ENCODE measurements at regions of chr21 and their contacts with region 1.

Region 1: GRCh38 chr21:29091032-29091431 is 17.6 kb upstream of the CCT8 start:
- DNase-seq: no peak
- H3K4me3 ChIP-seq: no peak overlapping the region
- H3K27ac ChIP-seq: no peak overlapping the region
- H3K4me1 ChIP-seq: no peaks in the 10 kb centered on the region
- CTCF ChIP-seq: no peak

Region 2: DNA sequence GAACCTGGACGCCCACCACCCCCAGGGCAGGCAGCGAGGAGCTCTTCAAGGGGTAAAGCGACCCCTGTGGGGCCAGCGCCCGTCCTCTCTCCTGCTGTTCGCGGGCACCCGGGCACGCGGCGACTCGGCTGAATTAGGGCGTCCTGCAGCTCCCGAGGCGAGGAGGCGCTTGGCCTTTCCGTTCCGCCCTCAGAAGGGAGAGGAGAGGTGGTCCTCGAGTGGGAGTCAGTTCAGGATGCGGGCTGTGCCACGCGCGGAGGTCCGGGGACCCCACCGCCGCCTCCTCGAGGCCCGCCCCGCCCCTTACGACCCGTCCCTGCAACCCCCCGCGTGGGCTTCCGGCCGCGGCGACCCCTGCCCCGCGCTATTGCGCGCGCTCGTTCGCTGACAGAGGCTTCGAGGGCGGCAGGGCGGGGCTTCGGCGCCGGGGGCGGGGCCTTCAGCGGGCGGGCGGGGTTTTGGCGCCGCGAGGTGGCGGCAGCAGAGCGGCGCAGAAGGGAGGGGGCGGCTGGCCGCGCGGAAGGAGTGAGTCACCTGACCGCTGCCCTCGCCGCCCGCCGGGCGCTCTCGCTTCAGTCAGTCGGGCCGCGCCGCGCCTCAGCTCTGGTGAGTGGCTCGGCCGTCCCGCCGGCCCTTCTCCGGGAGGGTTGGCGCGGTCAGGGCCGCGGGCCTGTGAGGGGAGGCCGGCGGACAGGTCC is 207.5 kb after region 1 on chr21 and contains the start of gene BACH1:
- CTCF ChIA-PET with region 1: no interaction called
- POLR2A ChIA-PET with region 1: interaction called, 3 read pairs
- intact Hi-C with region 1: loop called (anchors 5 kb)
- DNase-seq: peak; percentile 90
- H3K4me3 ChIP-seq: peak within 1 kb of the TSS; percentile 71
- H3K27ac ChIP-seq: peak within 1 kb of the TSS; percentile 11
- H3K4me1 ChIP-seq: peaks cover 48% of the 10 kb centered on the region
- CTCF ChIP-seq: peak; percentile 32; the same call in 1 of the 2 replicates
- total RNA-seq, gene BACH1: 18.6 and 19.1 TPM in 2 replicates

Region 3: GRCh38 chr21:29349702-29350101 is 258.7 kb after region 1 on chr21:
- CTCF ChIA-PET with region 1: interaction called, 10 read pairs
- POLR2A ChIA-PET with region 1: interaction called, 6 read pairs
- intact Hi-C with region 1: no loop called
- DNase-seq: no peak
- H3K4me3 ChIP-seq: no peak overlapping the region
- H3K27ac ChIP-seq: no peak overlapping the region
- H3K4me1 ChIP-seq: peaks cover 11% of the 10 kb centered on the region
- CTCF ChIP-seq: no peak

Region 4: GRCh38 chr21:29477941-29478340 is 386.9 kb after region 1 on chr21:
- CTCF ChIA-PET with region 1: no interaction called
- POLR2A ChIA-PET with region 1: no interaction called
- intact Hi-C with region 1: loop called (anchors 10 kb)
- DNase-seq: no peak
- H3K4me3 ChIP-seq: no peak overlapping the region
- H3K27ac ChIP-seq: no peak overlapping the region
- H3K4me1 ChIP-seq: peaks cover 4% of the 10 kb centered on the region
- CTCF ChIP-seq: no peak

Region 5: DNA sequence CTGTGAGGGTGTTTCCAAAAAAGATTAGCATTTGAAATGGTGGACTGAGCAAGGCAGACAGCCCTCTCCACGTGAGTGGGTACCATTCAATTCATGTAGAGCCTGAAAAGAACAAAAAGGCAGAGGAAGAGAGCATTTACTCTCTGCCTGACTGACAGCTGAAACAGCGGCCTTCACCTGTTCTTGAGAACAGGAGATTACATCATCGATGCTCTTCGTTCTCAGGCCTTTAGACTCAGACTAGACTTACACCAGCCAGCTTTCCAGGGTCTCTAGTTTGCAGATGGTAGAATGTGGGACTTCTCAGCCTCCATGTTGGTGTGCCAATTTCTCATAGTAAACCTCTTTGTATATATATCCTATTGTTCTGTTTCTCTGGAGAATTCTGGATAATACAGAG is 510.0 kb after region 1 on chr21:
- CTCF ChIA-PET with region 1: no interaction called
- POLR2A ChIA-PET with region 1: no interaction called
- intact Hi-C with region 1: no loop called
- DNase-seq: no peak
- H3K4me3 ChIP-seq: no peak overlapping the region
- H3K27ac ChIP-seq: no peak overlapping the region
- H3K4me1 ChIP-seq: no peaks in the 10 kb centered on the region
- CTCF ChIP-seq: no peak

Region 6: DNA sequence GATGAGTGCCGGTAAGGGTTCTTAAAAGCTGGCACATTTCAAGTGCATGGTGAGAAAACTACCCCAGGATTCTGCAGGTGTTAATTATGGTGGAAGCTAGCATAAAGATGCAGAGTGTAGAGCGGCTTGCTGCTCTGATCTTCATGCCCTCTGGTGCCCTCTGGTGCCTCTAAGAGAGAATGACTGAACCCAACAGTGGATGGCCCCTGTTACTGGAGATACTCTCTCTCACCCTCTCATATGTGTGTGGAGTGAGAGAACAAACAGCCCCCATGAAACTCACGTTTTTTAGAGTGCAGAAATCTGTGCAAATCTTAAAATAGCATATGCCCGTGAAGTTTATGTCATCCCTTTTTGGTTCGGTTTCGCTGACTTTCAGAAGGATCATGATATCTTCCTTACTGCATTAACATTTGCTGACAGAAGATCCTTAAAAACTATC is 758.7 kb after region 1 on chr21:
- CTCF ChIA-PET with region 1: no interaction called
- POLR2A ChIA-PET with region 1: interaction called, 4 read pairs
- intact Hi-C with region 1: loop called (anchors 2 kb)
- DNase-seq: peak; percentile 70
- H3K4me3 ChIP-seq: no peak overlapping the region
- H3K27ac ChIP-seq: no peak overlapping the region
- H3K4me1 ChIP-seq: no peaks in the 10 kb centered on the region
- CTCF ChIP-seq: peak; percentile 88

Measured in OCI-LY7 (cell line).